ENCODE measurements at regions of chr1 and their contacts with region 1.

Region 1: GRCh38 chr1:9724706-9725476 is 73.4 kb downstream of the PIK3CD start:
- DNase-seq: peak; percentile 47
- ATAC-seq: peak; percentile 87
- H3K4me3 ChIP-seq: no peak overlapping the region
- H3K27ac ChIP-seq: no peak overlapping the region
- H3K4me1 ChIP-seq: no peaks in the 10 kb centered on the region
- H3K27me3 ChIP-seq: no peaks in the 10 kb centered on the region
- CTCF ChIP-seq: peak; percentile 93
- POLR2A ChIP-seq: no peak
- RAD21 ChIP-seq: peak; percentile 71

Region 2: DNA sequence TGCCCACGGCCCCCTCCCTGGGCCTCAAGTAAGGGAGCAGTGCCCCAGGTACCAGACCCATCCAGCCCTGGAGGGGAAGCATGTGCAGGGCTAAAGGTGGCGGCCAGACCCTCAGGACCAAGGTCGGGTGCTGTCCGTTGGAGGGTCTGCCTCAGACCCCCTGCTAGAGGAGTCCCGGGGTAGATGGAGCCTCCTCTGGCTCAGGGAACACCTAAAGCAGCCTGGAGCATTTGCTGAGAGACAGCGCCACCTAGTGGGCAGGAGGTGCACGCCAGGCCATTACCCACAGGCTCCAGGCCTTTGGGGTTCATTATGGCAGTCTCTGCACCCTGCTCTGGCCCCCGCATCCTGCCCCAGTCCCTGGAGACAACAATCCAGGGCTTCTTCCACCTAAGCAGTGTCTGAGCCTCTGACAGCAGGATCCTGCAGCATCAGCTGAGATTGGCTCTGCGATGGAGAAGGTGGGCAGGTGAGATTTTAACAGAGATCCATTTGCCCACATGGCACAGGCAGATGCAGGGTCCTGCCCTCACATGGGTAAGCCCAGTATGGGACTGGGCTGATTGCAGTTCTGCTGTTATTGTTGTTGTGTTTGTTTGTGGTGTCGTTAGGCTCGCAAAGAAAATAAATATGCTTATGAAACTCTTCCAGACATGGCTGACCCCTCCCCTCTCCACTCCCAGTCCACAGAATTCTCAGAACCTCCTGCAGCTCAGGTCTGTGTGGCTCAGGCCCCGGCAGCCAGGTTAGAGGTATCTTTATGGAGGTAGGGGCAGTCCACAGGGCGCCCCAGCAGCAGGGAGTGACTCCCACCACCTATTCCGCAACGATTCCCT is 142.7 kb after region 1 on chr1:
- CTCF ChIA-PET with region 1: no interaction called
- POLR2A ChIA-PET with region 1: no interaction called
- dilution Hi-C with region 1: no loop called
- in situ Hi-C with region 1: loop called (anchors 10 kb)
- intact Hi-C with region 1: loop called (anchors 1 kb)
- DNase-seq: peak; percentile 57
- ATAC-seq: peak; percentile 98
- H3K4me3 ChIP-seq: no peak overlapping the region
- H3K27ac ChIP-seq: no peak overlapping the region
- H3K4me1 ChIP-seq: peaks cover 2% of the 10 kb centered on the region
- H3K27me3 ChIP-seq: no peaks in the 10 kb centered on the region
- CTCF ChIP-seq: peak; percentile 97
- POLR2A ChIP-seq: peak; percentile 61
- RAD21 ChIP-seq: peak; percentile 99